Activated CD4-positive, alpha-beta memory T cell treated with anti-CD3 and anti-CD28 coated beads for 36 hours (primary cell): ENCODE measurements at regions of chr12 and their contacts with region 1.

Region 1: GRCh38 chr12:68290126-68290525 is 36.7 kb upstream of the IL22 start:
- DNase-seq: peak; percentile 58
- H3K4me3 Mint-ChIP-seq: no peak overlapping the region
- H3K27ac Mint-ChIP-seq: peak overlapping the region; percentile 59
- H3K4me1 Mint-ChIP-seq: peaks cover 47% of the 10 kb centered on the region
- H3K27me3 Mint-ChIP-seq: peaks cover 23% of the 10 kb centered on the region

Region 2: GRCh38 chr12:67710582-67710981 is 579.5 kb before region 1 on chr12:
- CTCF ChIA-PET with region 1: no interaction called
- POLR2A ChIA-PET with region 1: no interaction called
- intact Hi-C with region 1: no loop called
- DNase-seq: no peak
- H3K4me3 Mint-ChIP-seq: no peak overlapping the region
- H3K27ac Mint-ChIP-seq: no peak overlapping the region
- H3K4me1 Mint-ChIP-seq: peaks cover 2% of the 10 kb centered on the region
- H3K27me3 Mint-ChIP-seq: no peaks in the 10 kb centered on the region

Region 3: GRCh38 chr12:68148258-68148951 is 141.7 kb before region 1 on chr12:
- CTCF ChIA-PET with region 1: no interaction called
- POLR2A ChIA-PET with region 1: no interaction called
- intact Hi-C with region 1: no loop called
- DNase-seq: no peak
- H3K4me3 Mint-ChIP-seq: no peak overlapping the region
- H3K27ac Mint-ChIP-seq: no peak overlapping the region
- H3K4me1 Mint-ChIP-seq: peaks cover 5% of the 10 kb centered on the region
- H3K27me3 Mint-ChIP-seq: no peaks in the 10 kb centered on the region

Region 4: GRCh38 chr12:68223083-68223747 is 66.9 kb before region 1 on chr12:
- CTCF ChIA-PET with region 1: interaction called, 11 read pairs
- POLR2A ChIA-PET with region 1: interaction called, 4 read pairs
- intact Hi-C with region 1: loop called (anchors 1 kb)
- DNase-seq: peak; percentile 83
- H3K4me3 Mint-ChIP-seq: no peak overlapping the region
- H3K27ac Mint-ChIP-seq: no peak overlapping the region
- H3K4me1 Mint-ChIP-seq: peaks cover 17% of the 10 kb centered on the region
- H3K27me3 Mint-ChIP-seq: peaks cover 7% of the 10 kb centered on the region

Region 5: GRCh38 chr12:68259318-68259940 is 30.7 kb before region 1 on chr12:
- CTCF ChIA-PET with region 1: no interaction called
- POLR2A ChIA-PET with region 1: interaction called, 4 read pairs
- intact Hi-C with region 1: loop called (anchors 1 kb)
- DNase-seq: peak; percentile 71
- H3K4me3 Mint-ChIP-seq: no peak overlapping the region
- H3K27ac Mint-ChIP-seq: peak overlapping the region; percentile 24
- H3K4me1 Mint-ChIP-seq: peaks cover 27% of the 10 kb centered on the region
- H3K27me3 Mint-ChIP-seq: peaks cover 37% of the 10 kb centered on the region

Region 6: DNA sequence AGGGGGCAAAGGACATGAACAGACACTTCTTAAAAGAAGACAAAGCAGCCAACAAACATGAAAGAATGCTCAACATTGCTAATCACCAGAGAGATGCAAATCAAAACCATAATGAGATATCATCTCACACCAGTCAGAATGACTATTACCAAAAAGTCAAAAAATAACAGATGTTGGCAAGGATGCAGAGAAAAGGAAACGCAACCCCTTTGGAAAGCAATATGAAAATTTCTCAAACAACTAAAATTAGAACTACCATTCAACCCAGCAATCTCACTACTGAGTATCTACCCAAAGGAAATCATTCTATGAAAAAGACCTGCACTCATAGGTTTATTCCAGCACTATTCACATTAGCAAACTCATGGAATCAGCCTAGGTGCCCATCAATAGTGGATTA is 16.4 kb after region 1 on chr12:
- CTCF ChIA-PET with region 1: no interaction called
- POLR2A ChIA-PET with region 1: no interaction called
- intact Hi-C with region 1: loop called (anchors 2 kb)
- DNase-seq: no peak
- H3K4me3 Mint-ChIP-seq: no peak overlapping the region
- H3K27ac Mint-ChIP-seq: no peak overlapping the region
- H3K4me1 Mint-ChIP-seq: peaks cover 15% of the 10 kb centered on the region
- H3K27me3 Mint-ChIP-seq: no peaks in the 10 kb centered on the region

Region 7: GRCh38 chr12:68374307-68374982 is 84.3 kb after region 1 on chr12:
- CTCF ChIA-PET with region 1: no interaction called
- POLR2A ChIA-PET with region 1: interaction called, 3 read pairs
- intact Hi-C with region 1: loop called (anchors 1 kb)
- DNase-seq: peak; percentile 84
- H3K4me3 Mint-ChIP-seq: peak overlapping the region; percentile 27
- H3K27ac Mint-ChIP-seq: peak overlapping the region; percentile 98
- H3K4me1 Mint-ChIP-seq: peaks cover 45% of the 10 kb centered on the region
- H3K27me3 Mint-ChIP-seq: no peaks in the 10 kb centered on the region

Region 8: GRCh38 chr12:68482660-68483059 is 192.5 kb after region 1 on chr12:
- CTCF ChIA-PET with region 1: no interaction called
- POLR2A ChIA-PET with region 1: interaction called, 6 read pairs
- intact Hi-C with region 1: loop called (anchors 5 kb)
- DNase-seq: peak; percentile 49
- H3K4me3 Mint-ChIP-seq: no peak overlapping the region
- H3K27ac Mint-ChIP-seq: peak overlapping the region; percentile 94
- H3K4me1 Mint-ChIP-seq: peaks cover 50% of the 10 kb centered on the region
- H3K27me3 Mint-ChIP-seq: no peaks in the 10 kb centered on the region